ENCODE measurements at regions of chr22 and their contacts with region 1.

Region 1: DNA sequence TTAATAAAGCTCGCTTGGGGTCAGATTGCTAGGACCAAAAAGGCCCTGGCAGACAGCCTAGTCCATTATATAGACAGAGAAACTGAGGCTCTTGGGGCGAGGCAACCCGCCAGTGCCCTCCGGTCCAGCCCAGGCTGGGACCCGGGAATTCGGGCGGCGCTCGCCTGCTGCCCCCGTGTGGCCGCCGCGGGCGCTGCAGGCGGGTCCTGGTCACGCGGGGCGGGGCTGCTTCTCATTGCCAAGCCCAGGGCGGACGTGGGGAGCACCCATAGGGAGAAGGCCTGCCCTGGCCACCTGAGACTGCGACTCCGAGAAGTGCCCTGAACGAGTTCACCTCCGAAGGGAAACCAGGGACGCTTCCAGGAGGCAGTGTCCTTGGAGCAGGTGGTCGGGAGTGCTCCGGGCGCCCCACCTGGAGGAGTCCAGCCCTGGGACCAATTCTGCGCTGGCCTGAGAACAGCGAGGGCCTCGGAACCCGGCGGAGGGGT is 36.0 kb upstream of the CSNK1E start:
- DNase-seq: peak in 1 of 2 donors; percentile 85
- H3K4me3 ChIP-seq: no peak overlapping the region
- H3K27ac ChIP-seq: peak overlapping the region in 1 of 2 donors; percentile 19
- H3K4me1 ChIP-seq: peaks cover 0 to 6% of the 10 kb centered on the region in 2 donors
- H3K27me3 ChIP-seq: no peaks in the 10 kb centered on the region
- CTCF ChIP-seq: peak; percentile 99 to 100 (median 99)

Region 2: DNA sequence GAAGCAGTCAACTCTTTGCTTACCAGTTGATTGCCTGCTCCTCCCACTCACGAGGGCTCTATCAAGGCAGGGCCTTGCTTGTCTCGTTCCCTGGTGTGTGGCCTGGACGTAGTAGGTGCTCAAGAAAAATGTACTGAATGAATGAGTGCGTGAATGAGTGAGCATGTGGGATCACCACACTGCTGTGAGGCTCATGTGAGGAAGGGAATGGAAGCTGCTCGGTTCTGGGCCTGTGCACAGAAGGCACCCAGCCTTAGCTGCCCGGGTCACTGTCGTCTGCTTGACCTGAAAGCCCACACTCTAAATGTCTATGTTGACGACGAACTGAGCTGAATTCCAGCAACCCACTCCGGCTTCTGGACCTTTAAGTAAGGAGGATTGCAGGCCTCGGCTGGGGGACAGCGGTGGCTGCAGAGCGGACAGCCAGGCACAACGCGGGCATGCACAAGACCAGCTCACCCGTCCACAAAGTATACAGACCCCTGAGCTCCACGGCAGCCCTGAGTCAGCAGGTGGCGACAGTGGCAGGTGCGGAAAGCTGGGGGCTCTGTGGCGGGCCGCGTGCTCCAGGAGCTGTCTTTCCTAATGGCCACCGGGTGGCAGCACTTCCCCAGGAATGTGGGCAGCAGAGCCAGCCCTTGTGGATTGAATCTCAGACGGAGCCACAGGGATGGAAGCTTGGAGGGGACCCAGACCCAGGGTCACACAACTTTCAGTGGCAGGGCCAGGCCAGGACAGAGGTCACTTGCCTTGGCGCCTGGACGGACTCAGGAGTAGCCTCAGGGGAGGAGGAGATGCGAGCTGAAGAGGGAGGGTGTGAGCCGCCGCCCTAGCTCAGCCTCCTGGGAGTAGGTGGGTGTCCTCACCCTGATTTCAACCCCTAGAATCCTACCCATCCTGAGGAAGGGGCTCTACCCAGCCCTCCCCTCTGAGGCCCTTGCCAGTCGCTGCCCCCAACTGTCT is 301.0 kb before region 1 on chr22:
- intact Hi-C with region 1: loop called (anchors 1 kb)
- DNase-seq: peak in 1 of 2 donors; percentile 90
- H3K4me3 ChIP-seq: no peak overlapping the region
- H3K27ac ChIP-seq: no peak overlapping the region
- H3K4me1 ChIP-seq: peaks cover 6 to 7% of the 10 kb centered on the region in 2 donors
- H3K27me3 ChIP-seq: no peaks in the 10 kb centered on the region
- CTCF ChIP-seq: peak; percentile 82 to 93 (median 93)

Region 3: DNA sequence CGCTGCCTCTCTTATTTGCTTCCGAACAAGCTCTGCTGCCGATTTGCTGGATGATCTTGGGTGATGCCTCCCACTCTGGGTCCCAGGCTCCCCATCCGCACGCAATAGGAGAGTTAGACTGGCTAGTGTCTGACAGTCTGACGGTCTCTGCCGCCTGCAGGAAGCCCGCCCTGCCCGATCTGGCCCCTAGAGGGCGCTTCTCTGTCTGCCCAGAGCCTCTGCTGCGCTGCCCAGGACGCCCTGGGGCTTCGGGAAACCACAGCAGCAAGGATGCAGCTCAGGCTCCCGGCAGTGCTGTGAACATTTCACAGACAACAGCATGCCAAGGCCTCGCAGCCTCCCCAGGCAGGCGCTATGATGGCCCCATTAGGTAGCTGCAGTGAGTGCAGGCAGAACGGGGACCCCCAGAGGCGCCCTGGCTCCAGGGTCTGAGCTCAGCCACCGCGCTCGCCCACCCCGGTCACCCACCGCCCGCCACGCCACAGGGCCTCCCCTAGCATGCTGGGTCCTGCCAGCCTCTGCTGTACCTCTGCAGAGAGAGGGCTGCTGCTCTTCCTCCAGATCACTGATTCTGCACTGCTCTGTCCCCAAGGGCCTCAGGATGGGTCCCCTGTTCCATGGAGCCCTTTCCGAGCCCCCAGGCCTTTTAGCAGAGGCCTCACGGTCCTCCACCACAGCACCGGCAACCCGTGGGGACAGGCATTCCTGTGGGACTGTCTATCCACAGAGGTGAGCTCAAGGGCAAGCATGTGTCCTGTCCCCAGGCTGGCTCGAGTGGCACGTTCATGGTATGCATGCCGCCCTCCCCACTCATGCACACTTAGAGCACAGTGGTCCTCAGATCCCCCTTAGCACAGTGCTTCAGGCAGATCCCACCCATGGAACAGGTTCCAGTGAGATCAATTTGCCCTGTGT is 238.4 kb before region 1 on chr22:
- intact Hi-C with region 1: loop called (anchors 5 kb)
- DNase-seq: peak; percentile 27 to 89
- H3K4me3 ChIP-seq: no peak overlapping the region
- H3K27ac ChIP-seq: no peak overlapping the region
- H3K4me1 ChIP-seq: peaks cover 0 to 15% of the 10 kb centered on the region in 2 donors
- H3K27me3 ChIP-seq: no peaks in the 10 kb centered on the region
- CTCF ChIP-seq: peak; percentile 94 to 97 (median 95)

Region 4: GRCh38 chr22:38260761-38261681 is 92.2 kb before region 1 on chr22:
- intact Hi-C with region 1: loop called (anchors 2 kb)
- DNase-seq: no peak
- H3K4me3 ChIP-seq: peak overlapping the region in 1 of 2 donors; percentile 16
- H3K27ac ChIP-seq: peak overlapping the region; percentile 83 to 88
- H3K4me1 ChIP-seq: peaks cover 12 to 50% of the 10 kb centered on the region in 2 donors
- H3K27me3 ChIP-seq: no peaks in the 10 kb centered on the region
- CTCF ChIP-seq: peak in 2 of 3 experiments; percentile 14 to 37

Region 5: DNA sequence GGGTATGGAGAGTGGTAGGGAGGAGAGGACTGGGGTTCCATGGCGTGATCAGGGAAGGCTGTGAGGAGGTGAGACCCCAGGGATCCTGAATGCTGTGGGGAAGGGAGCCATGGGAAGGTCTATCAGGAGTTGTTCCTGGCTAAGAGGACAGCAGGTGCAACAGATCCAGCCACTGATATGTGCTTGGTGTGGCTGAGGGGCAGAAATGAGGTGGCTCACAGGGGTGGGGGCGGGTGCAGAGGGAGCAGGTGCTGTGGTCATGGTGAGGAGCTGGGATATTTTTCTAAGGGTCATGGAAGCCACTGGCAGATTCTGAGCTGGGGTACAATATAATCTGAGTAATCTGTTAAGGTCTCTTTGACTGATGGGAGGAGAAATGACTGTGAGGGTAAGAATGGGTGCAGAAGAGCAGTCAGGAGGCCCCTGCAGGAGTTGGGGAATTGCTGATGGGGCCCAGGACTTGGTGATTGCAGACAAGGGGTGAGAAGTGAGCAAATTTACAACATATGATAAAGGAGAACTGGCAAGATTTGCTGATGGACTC is 248.1 kb after region 1 on chr22:
- intact Hi-C with region 1: no loop called
- DNase-seq: no peak
- H3K4me3 ChIP-seq: no peak overlapping the region
- H3K27ac ChIP-seq: no peak overlapping the region
- H3K4me1 ChIP-seq: no peaks in the 10 kb centered on the region
- H3K27me3 ChIP-seq: no peaks in the 10 kb centered on the region
- CTCF ChIP-seq: no peak